Endothelial cell of umbilical vein (primary cell): ENCODE measurements at regions of chr4 and their contacts with region 1.

Region 1: DNA sequence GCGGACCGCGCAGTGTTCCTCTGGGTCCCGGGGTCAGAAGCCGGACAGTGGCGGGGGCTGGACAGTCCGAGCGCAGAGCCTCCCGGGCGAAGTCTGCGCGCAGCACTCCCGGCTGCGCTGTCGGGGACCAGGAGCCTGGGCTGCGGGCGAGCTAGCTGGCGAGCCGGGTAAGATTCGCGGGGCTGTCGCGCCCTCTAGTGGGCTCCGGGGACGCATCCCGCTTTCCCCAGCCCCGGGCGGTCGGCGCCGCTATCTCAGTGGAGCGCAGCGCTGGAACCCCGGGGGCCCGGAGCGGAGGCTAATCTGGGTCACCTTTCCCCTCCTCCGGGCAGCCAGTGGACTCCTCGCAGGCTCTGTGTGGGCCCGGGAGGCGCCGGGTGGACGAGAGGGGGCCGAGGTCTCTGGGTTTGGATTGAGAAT is 4.2 kb downstream of the PDGFRA start:
- DNase-seq: peak; percentile 77
- H3K4me3 ChIP-seq: peak overlapping the region in 2 of 3 experiments; percentile 43 to 62
- H3K27ac ChIP-seq: no peak overlapping the region
- H3K4me1 ChIP-seq: peaks cover 24% of the 10 kb centered on the region
- H3K27me3 ChIP-seq: peaks cover 49 to 53% of the 10 kb centered on the region in 2 experiments
- CTCF ChIP-seq: peak; percentile 81 to 95
- POLR2A ChIP-seq: no peak

Region 2: GRCh38 chr4:52588097-52588782 is 1645.0 kb before region 1 on chr4:
- CTCF ChIA-PET with region 1: interaction called, 7 read pairs
- POLR2A ChIA-PET with region 1: no interaction called
- dilution Hi-C with region 1: no loop called
- intact Hi-C with region 1: loop called (anchors 5 kb)
- DNase-seq: peak; percentile 67
- H3K4me3 ChIP-seq: no peak overlapping the region
- H3K27ac ChIP-seq: peak overlapping the region; percentile 96
- H3K4me1 ChIP-seq: peaks cover 17% of the 10 kb centered on the region
- H3K27me3 ChIP-seq: no peaks in the 10 kb centered on the region
- CTCF ChIP-seq: peak; percentile 55 to 73
- POLR2A ChIP-seq: no peak

Region 3: GRCh38 chr4:53015681-53016080 is 1217.6 kb before region 1 on chr4:
- CTCF ChIA-PET with region 1: interaction called, 145 read pairs
- POLR2A ChIA-PET with region 1: no interaction called
- dilution Hi-C with region 1: no loop called
- intact Hi-C with region 1: loop called (anchors 1 kb)
- DNase-seq: peak; percentile 81
- H3K4me3 ChIP-seq: no peak overlapping the region
- H3K27ac ChIP-seq: no peak overlapping the region
- H3K4me1 ChIP-seq: peaks cover 18% of the 10 kb centered on the region
- H3K27me3 ChIP-seq: no peaks in the 10 kb centered on the region
- CTCF ChIP-seq: peak; percentile 53 to 63
- POLR2A ChIP-seq: no peak

Region 4: DNA sequence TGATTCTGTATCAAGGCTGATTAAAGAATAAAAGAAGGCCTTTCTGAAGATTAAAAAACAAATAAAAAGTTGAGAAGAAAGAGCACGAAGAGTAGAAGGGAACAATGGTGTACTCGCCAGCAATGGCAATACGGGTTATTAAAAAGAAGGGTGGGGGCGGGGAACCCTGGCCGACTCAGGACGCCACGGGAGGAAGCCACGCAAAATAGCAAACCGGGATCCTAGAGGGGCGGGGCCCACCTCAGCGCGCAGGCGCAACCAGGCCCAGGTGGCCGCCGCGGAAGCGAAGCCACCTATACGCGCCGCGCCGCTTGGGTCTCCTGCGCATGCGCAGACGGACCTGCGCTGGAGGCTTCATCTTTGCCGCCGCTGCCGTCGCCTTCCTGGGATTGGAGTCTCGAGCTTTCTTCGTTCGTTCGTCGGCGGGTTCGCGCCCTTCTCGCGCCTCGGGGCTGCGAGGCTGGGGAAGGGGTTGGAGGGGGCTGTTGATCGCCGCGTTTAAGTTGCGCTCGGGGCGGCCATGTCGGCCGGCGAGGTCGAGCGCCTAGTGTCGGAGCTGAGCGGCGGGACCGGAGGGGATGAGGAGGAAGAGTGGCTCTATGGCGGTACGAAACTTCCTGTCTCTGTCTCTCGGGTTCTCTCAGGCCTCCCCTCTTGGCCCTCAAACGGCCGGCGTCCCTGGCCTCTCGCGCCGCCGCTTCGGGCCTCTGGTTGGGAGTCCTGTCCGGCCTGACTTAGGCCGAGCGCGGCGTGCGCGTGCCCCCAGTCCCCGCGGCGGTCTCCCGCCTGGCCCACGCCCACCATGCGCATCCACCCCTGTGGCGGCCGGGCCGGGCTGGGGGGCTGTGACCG is 855.7 kb before region 1 on chr4 and contains the start of gene FIP1L1:
- CTCF ChIA-PET with region 1: interaction called, 9 read pairs
- POLR2A ChIA-PET with region 1: no interaction called
- dilution Hi-C with region 1: no loop called
- intact Hi-C with region 1: loop called (anchors 2 kb)
- DNase-seq: peak; percentile 95
- H3K4me3 ChIP-seq: peak within 1 kb of the TSS; percentile 82 to 90 (median 88)
- H3K27ac ChIP-seq: peak within 1 kb of the TSS; percentile 67
- H3K4me1 ChIP-seq: peaks cover 13% of the 10 kb centered on the region
- H3K27me3 ChIP-seq: peaks cover 0 to 8% of the 10 kb centered on the region in 2 experiments
- CTCF ChIP-seq: no peak
- POLR2A ChIP-seq: peak; percentile 95
- total RNA-seq, gene FIP1L1: 51.9 and 52.1 TPM in 2 replicates

Region 5: DNA sequence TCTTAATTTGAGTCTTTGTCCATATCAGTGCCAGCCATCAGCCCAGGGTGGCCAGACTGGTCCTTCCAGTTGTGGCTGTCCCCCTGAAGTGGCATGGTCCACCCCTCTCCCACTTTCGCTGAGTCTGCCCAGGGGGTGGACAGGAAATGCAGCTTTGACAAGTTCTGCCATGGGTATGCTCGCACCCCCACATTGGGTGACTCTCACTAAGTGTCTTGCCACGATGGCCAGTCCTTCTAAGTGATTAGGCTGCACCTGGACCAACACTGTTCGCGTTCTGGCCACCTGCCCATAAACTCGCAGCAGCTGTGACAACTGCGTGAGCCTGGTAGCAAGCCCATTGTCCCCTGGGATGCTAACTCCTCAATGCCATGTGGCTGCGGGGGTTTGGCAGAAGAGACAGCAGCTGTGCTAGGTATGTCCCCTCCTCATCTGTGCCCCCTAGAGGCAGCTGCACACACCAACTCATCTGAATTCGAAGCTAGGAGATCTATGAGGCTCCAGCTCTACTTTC is 632.0 kb before region 1 on chr4:
- CTCF ChIA-PET with region 1: interaction called, 14 read pairs
- POLR2A ChIA-PET with region 1: no interaction called
- dilution Hi-C with region 1: no loop called
- intact Hi-C with region 1: loop called (anchors 2 kb)
- DNase-seq: peak; percentile 22
- H3K4me3 ChIP-seq: no peak overlapping the region
- H3K27ac ChIP-seq: no peak overlapping the region
- H3K4me1 ChIP-seq: peaks cover 2% of the 10 kb centered on the region
- H3K27me3 ChIP-seq: no peaks in the 10 kb centered on the region
- CTCF ChIP-seq: peak; percentile 35 to 57
- POLR2A ChIP-seq: no peak

Region 6: DNA sequence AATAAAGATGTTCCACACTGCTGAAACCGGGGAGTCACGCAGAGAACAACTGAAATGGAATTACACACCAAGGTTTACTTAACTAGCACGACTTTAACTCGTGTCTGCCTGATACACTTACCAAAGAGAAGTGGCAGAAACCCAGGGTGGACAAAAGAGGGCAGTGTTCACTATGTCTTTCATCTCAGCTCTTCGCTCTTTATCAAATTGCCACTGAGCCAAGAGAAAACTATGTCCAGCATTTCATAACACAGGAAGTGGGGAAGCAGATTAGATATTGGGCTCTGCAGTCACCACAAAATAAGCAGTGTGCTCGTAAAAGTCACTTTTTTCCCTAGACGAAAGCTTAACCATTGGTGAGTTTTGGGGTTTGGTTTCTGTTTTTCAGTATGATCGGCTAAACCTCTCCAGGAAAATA is 324.6 kb before region 1 on chr4:
- CTCF ChIA-PET with region 1: interaction called, 198 read pairs
- POLR2A ChIA-PET with region 1: no interaction called
- dilution Hi-C with region 1: no loop called
- intact Hi-C with region 1: loop called (anchors 1 kb)
- DNase-seq: peak; percentile 87
- H3K4me3 ChIP-seq: no peak overlapping the region
- H3K27ac ChIP-seq: no peak overlapping the region
- H3K4me1 ChIP-seq: peaks cover 3% of the 10 kb centered on the region
- H3K27me3 ChIP-seq: peaks cover 26% of the 10 kb centered on the region in 2 experiments
- CTCF ChIP-seq: peak; percentile 77 to 85
- POLR2A ChIP-seq: no peak